ENCODE measurements at regions of chr4 and their contacts with region 1.

Region 1: GRCh38 chr4:77862478-77863216 is at the start of gene MRPL1:
- DNase-seq: peak; percentile 83
- ATAC-seq: peak; percentile 92
- H3K4me3 Mint-ChIP-seq: peak within 1 kb of the TSS; percentile 94
- H3K27ac Mint-ChIP-seq: peak within 1 kb of the TSS; percentile 99
- H3K4me1 Mint-ChIP-seq: peaks cover 20% of the 10 kb centered on the region
- H3K27me3 Mint-ChIP-seq: no peaks in the 10 kb centered on the region
- CTCF ChIP-seq: no peak
- total RNA-seq, gene MRPL1: 24.3 to 27.9 TPM (median 25.7 TPM) in 3 replicates

Region 2: GRCh38 chr4:77819843-77820648 is 42.6 kb before region 1 on chr4:
- CTCF ChIA-PET with region 1: interaction called, 5 read pairs
- POLR2A ChIA-PET with region 1: interaction called, 15 read pairs
- DNase-seq: peak; percentile 87
- ATAC-seq: peak; percentile 82
- H3K4me3 Mint-ChIP-seq: peak overlapping the region; percentile 95
- H3K27ac Mint-ChIP-seq: peak overlapping the region; percentile 92
- H3K4me1 Mint-ChIP-seq: peaks cover 14% of the 10 kb centered on the region
- H3K27me3 Mint-ChIP-seq: peaks cover 7% of the 10 kb centered on the region
- CTCF ChIP-seq: no peak

Measured in WTC11 (cell line).